ENCODE measurements at regions of chr9 and their contacts with region 1.

Region 1: DNA sequence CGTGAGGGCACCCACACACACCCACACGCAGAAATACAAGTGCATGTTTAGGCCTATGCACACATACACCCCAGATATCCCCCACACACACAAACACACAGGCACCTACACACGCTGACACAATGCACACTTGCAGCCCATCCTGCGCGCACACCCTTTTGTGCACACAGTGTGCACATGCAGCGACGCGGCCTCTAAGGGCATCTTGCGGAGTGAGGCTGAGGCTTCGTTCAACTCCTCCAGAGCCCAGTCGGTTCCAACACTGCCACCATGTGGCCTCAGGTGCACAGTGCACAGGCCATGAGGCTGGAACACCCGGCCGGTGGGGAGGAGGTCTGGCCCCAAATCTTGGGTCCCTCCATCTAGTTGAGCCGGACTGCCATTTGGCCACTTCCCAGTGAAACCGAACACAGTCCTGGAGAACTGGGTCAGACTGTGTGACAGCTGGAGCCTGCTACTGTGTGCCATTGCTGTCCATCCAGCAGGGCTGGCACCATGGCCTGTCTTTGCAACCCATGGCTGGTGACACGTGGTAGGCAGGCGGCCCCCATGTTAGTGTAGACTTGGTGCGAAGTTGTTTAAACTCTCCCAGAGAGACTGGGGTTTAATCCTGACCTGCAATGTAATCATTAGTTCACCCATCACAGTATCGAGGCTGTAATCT is 97.7 kb upstream of the MVB12B start:
- DNase-seq: peak; percentile 44 to 70
- H3K4me3 ChIP-seq: no peak overlapping the region
- H3K27ac ChIP-seq: no peak overlapping the region
- H3K4me1 ChIP-seq: no peaks in the 10 kb centered on the region
- H3K27me3 ChIP-seq: peaks cover 85% of the 10 kb centered on the region
- CTCF ChIP-seq: peak; percentile 91

Region 2: DNA sequence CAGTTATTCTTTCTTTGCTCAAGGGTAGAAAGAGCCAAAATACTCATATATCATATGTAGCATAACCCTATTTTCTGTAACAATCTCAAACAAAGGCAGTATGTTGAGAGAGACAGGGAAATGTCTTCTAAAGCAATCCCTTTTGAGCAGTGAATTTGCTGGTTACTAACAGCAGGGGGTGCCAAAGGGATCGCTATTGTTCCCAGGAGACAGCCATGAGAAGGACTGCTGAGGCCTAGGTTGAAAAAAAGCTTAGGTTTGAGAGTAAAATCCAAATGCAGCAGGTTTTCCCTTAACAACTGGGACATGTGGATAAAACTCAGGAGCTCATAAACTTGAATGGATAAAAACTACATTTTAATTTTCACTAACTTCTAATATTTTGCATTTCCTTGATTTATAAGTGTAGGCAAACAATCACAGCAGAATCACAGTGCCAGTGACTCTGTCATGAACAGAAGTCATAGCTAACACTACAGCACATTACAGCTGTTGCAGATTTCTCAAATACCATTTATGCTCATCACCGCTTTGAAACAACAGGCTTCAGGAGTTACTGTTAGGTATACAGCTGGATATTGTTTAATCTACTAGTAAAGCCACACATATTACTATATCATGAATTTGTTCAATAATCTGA is 670.3 kb before region 1 on chr9:
- CTCF ChIA-PET with region 1: no interaction called
- POLR2A ChIA-PET with region 1: no interaction called
- intact Hi-C with region 1: loop called (anchors 2 kb)
- DNase-seq: peak; percentile 56 to 57
- H3K4me3 ChIP-seq: no peak overlapping the region
- H3K27ac ChIP-seq: no peak overlapping the region
- H3K4me1 ChIP-seq: no peaks in the 10 kb centered on the region
- H3K27me3 ChIP-seq: no peaks in the 10 kb centered on the region
- CTCF ChIP-seq: peak; percentile 84

Region 3: GRCh38 chr9:126275386-126276001 is 46.6 kb after region 1 on chr9:
- CTCF ChIA-PET with region 1: no interaction called
- POLR2A ChIA-PET with region 1: no interaction called
- intact Hi-C with region 1: no loop called
- DNase-seq: no peak
- H3K4me3 ChIP-seq: no peak overlapping the region
- H3K27ac ChIP-seq: no peak overlapping the region
- H3K4me1 ChIP-seq: no peaks in the 10 kb centered on the region
- H3K27me3 ChIP-seq: peaks cover 20% of the 10 kb centered on the region
- CTCF ChIP-seq: no peak

Region 4: DNA sequence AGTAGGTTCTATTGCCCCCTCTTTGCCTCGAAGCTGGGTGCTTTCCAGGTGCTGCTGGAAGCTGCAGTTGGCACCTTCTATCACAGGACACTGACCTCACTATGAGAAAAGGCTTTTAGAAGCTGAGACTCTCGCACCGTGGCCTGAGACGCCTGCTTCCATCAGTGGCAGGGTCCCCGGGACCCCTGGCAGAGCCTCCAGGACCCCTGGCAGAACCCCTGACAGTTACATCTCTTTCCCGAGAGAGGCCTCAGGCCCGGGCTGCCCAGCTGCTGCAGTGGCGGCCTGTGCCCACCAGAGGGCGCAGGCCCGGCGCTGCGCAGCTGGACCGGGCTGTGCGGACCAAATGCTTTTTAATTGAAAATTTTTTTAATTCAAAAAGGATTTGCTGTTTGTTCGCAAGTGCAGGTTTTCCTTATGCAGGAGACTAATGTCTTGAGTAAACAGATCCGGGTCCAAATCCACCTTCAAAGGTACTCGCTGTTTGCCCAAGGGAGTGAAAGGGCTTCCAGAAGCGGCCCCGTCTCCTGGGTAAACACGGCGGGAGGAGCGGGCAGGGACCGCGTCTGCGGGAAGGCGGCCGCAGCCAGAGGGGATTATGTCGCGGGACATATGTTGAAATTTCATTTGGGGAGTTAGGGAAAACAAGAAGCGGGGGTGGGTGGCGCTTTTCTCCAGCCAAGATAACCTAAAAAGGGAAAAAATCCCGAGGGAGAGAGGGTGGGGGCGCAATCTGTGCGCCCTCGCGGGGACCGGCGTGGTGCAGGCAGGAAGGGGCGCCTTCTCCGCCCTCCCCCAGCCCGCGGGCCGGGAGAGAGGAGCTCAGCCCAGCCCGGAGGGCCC is 270.4 kb after region 1 on chr9:
- CTCF ChIA-PET with region 1: no interaction called
- POLR2A ChIA-PET with region 1: no interaction called
- intact Hi-C with region 1: no loop called
- DNase-seq: peak in 1 of 2 experiments; percentile 53
- H3K4me3 ChIP-seq: peak overlapping the region; percentile 46; the same call in 1 of the 2 replicates
- H3K27ac ChIP-seq: no peak overlapping the region
- H3K4me1 ChIP-seq: no peaks in the 10 kb centered on the region
- H3K27me3 ChIP-seq: peaks cover 5% of the 10 kb centered on the region; the same call in 1 of the 2 replicates
- CTCF ChIP-seq: peak; percentile 99